MCF 10A (cell line): ENCODE measurements at regions of chr14 and their contacts with region 1.

Region 1: GRCh38 chr14:77023001-77023996 is 5.2 kb downstream of the IRF2BPL start:
- DNase-seq: peak; percentile 52
- H3K4me3 Mint-ChIP-seq: peak overlapping the region; percentile 81
- H3K27ac Mint-ChIP-seq: no peak overlapping the region
- H3K4me1 Mint-ChIP-seq: peaks cover 23% of the 10 kb centered on the region
- H3K27me3 Mint-ChIP-seq: no peaks in the 10 kb centered on the region
- CTCF ChIP-seq: peak; percentile 6

Region 2: DNA sequence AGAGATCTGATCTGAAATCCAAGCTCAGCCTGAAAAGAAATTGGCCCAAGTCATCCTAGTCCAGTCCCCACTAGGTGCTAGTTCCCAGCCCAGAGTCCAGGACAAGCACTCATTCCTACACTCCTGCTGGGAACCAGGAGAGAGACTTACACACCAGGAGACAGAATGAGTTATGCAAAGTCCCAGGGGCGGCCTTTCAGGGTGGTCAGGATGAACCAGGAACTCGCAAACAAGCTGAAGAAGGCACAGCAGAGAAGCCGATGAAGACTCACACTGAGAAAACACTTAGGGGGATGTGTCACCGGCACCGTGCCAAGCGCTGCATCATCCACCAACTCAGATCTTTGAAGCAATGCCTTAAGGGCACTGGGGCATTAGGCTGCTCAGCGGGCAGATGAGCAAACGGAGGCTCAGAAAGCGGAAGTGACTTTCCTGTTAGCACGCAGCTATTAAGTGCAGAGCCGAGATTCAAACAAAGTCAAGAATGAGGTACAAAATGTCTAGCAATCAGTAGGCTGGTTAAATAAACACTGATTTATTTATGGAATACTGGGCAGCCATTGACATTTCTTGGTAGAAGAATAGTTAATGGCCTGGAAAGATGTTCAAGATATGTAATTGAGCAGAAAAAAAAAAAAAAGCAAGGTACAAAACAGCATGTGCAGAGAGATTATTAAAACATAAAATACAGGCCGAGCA is 118.4 kb before region 1 on chr14:
- CTCF ChIA-PET with region 1: no interaction called
- POLR2A ChIA-PET with region 1: interaction called, 12 read pairs
- intact Hi-C with region 1: no loop called
- DNase-seq: peak; percentile 99
- H3K4me3 Mint-ChIP-seq: peak overlapping the region; percentile 55
- H3K27ac Mint-ChIP-seq: peak overlapping the region; percentile 57
- H3K4me1 Mint-ChIP-seq: peaks cover 29% of the 10 kb centered on the region
- H3K27me3 Mint-ChIP-seq: no peaks in the 10 kb centered on the region
- CTCF ChIP-seq: no peak

Region 3: DNA sequence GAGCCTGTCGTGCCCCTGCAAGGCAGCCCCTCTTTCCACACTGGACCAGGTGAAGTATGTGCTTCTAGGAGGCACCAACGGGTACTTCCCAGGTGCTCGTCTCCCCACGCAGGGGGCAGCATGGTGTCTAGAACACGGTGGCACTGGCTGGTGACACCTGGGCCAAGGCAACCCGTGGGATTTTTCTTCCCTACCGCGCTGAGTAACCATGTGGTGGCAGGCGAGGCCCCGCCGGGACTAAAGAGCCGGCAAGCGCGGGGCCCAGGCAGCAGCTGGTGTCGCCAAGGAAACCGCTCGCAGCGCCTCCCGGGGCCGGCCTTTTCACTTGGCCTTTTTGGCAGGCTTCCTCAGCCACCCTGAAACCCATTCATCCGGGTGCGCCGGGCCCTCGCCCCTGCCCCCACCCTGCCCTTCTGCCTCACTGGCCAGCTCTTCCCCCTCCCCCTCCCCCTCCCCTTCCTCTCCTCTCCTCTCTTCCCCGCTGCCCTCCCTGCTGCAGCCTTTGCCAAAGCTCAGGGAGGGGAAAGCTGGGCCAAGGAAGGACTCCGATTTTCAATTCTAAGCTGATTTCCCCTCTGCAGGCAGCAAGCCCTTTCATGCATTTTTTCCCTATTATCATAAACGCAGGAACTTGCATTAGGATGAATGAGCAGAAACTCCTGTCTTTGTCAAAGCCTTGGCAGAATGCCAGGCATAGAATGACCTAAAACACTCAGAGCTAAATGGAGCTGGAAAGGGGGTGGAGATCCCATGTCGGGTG is 76.0 kb before region 1 on chr14:
- CTCF ChIA-PET with region 1: interaction called, 9 read pairs
- POLR2A ChIA-PET with region 1: interaction called, 325 read pairs
- intact Hi-C with region 1: loop called (anchors 1 kb)
- DNase-seq: peak; percentile 88
- H3K4me3 Mint-ChIP-seq: peak overlapping the region; percentile 31
- H3K27ac Mint-ChIP-seq: peak overlapping the region; percentile 94
- H3K4me1 Mint-ChIP-seq: peaks cover 28% of the 10 kb centered on the region
- H3K27me3 Mint-ChIP-seq: no peaks in the 10 kb centered on the region
- CTCF ChIP-seq: peak; percentile 31

Region 4: GRCh38 chr14:76956316-76957090 is 66.8 kb before region 1 on chr14:
- CTCF ChIA-PET with region 1: interaction called, 14 read pairs
- POLR2A ChIA-PET with region 1: interaction called, 325 read pairs
- intact Hi-C with region 1: loop called (anchors 1 kb)
- DNase-seq: peak; percentile 97
- H3K4me3 Mint-ChIP-seq: peak overlapping the region; percentile 49
- H3K27ac Mint-ChIP-seq: peak overlapping the region; percentile 92
- H3K4me1 Mint-ChIP-seq: peaks cover 55% of the 10 kb centered on the region
- H3K27me3 Mint-ChIP-seq: no peaks in the 10 kb centered on the region
- CTCF ChIP-seq: no peak

Region 5: GRCh38 chr14:77007975-77008421 is 15.3 kb before region 1 on chr14:
- CTCF ChIA-PET with region 1: interaction called, 5 read pairs
- POLR2A ChIA-PET with region 1: interaction called, 38 read pairs
- intact Hi-C with region 1: no loop called
- DNase-seq: peak; percentile 17
- H3K4me3 Mint-ChIP-seq: no peak overlapping the region
- H3K27ac Mint-ChIP-seq: peak overlapping the region; percentile 24
- H3K4me1 Mint-ChIP-seq: peaks cover 53% of the 10 kb centered on the region
- H3K27me3 Mint-ChIP-seq: no peaks in the 10 kb centered on the region
- CTCF ChIP-seq: no peak

Region 6: DNA sequence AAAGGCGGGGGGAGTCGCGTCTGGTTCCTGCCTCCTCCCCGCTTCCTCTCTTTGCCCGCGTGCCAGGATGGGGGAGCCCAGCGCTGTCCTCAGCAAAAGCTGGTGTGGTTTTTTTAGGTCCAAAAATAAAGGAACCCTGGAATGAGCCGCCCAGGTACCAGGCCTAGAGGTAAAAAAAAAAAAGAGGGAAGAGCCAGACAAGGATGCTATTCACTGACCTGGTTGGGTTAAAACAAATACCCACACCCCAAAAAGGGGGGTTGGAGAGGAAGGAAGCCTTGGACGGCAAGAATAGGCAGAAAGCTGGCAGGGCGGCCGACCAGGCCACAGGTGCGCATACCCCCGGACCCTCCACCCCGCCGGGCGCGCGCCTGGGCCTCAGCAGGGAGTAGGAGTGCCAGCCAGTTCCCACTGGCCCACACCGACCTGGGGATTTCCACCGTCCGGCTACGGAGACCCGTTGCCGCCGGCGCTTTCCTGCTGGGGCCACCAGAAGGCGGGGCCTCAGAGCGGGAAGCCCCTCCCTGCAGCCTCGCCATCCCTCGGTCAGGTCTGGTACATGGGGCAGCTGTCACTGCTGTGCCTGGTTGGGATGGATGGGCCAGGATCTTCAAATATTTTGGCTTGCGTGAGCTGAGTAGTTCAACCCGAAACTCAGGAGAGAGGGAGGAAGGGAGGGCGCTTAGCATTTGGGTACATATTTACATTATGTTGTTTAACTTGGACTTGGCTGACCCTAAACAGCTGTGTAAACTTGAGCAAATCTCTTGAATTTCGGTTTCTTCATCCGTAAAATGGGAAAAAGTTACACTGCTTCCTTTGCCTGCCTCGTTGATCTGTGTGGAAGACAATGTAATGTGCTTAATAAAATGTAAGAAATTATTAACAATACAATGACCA is 10.6 kb after region 1 on chr14:
- CTCF ChIA-PET with region 1: interaction called, 4 read pairs
- POLR2A ChIA-PET with region 1: interaction called, 721 read pairs
- intact Hi-C with region 1: no loop called
- DNase-seq: peak; percentile 90
- H3K4me3 Mint-ChIP-seq: peak overlapping the region; percentile 75
- H3K27ac Mint-ChIP-seq: peak overlapping the region; percentile 93
- H3K4me1 Mint-ChIP-seq: peaks cover 37% of the 10 kb centered on the region
- H3K27me3 Mint-ChIP-seq: no peaks in the 10 kb centered on the region
- CTCF ChIP-seq: no peak

Region 7: DNA sequence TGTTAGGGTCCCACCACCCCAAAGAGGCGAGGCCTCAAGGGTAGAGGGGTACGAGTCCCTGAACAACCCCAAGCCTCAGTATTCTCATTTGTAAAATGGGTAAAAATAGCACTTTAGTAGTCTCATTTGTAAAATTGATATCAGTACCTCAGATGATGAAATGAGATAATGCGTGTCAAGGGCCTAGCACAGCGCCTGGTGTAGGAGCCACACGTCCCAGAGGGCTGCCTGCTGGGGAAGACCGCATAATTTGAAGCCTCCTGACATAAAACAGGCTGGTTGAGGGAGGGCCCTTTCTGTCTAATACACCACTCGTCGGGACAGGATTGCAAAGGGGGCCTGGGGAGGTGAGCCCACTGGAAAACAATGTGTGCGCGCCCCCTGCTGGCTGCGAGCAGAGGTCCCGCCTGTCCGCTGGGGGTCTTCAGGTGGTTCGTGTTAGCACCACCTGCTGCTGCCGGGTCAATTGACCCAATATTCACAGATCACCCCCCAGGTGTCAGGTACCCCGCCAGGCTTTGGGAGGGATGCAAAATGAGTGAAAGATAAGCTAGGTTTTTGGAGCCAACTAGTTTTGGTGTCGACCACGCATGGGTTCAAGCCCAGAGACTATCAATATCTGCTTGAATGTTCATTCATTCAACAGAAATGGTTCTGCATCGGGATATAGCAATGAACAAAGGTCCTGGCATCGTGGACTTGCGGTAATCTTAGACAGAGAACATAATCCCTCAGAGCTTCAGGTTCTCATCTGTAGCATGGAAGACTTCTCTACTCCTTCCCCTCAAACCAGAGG is 29.9 kb after region 1 on chr14:
- CTCF ChIA-PET with region 1: interaction called, 12 read pairs
- POLR2A ChIA-PET with region 1: interaction called, 8 read pairs
- intact Hi-C with region 1: loop called (anchors 1 kb)
- DNase-seq: peak; percentile 63
- H3K4me3 Mint-ChIP-seq: no peak overlapping the region
- H3K27ac Mint-ChIP-seq: peak overlapping the region; percentile 90
- H3K4me1 Mint-ChIP-seq: peaks cover 15% of the 10 kb centered on the region
- H3K27me3 Mint-ChIP-seq: no peaks in the 10 kb centered on the region
- CTCF ChIP-seq: peak; percentile 71

Region 8: GRCh38 chr14:77290741-77291140 is 267.4 kb after region 1 on chr14:
- CTCF ChIA-PET with region 1: no interaction called
- POLR2A ChIA-PET with region 1: no interaction called
- intact Hi-C with region 1: no loop called
- DNase-seq: no peak
- H3K4me3 Mint-ChIP-seq: no peak overlapping the region
- H3K27ac Mint-ChIP-seq: no peak overlapping the region
- H3K4me1 Mint-ChIP-seq: no peaks in the 10 kb centered on the region
- H3K27me3 Mint-ChIP-seq: no peaks in the 10 kb centered on the region
- CTCF ChIP-seq: no peak